CD4-positive, alpha-beta memory T cell (primary cell): ENCODE measurements at regions of chr15 and their contacts with region 1.

Region 1: GRCh38 chr15:56918046-56918938 is at the start of gene TCF12:
- DNase-seq: peak; percentile 90 to 94 (median 91)
- H3K4me3 ChIP-seq: peak within 1 kb of the TSS; percentile 80 to 82
- H3K4me3 Mint-ChIP-seq: peak within 1 kb of the TSS; percentile 81 to 96 (median 88)
- H3K27ac ChIP-seq: peak within 1 kb of the TSS; percentile 79
- H3K27ac Mint-ChIP-seq: peak within 1 kb of the TSS; percentile 83 to 91 (median 86)
- H3K4me1 ChIP-seq: peaks cover 39% of the 10 kb centered on the region
- H3K4me1 Mint-ChIP-seq: peaks cover 32 to 55% (median 36%) of the 10 kb centered on the region in 4 donors
- H3K27me3 ChIP-seq: no peaks in the 10 kb centered on the region
- H3K27me3 Mint-ChIP-seq: no peaks in the 10 kb centered on the region
- total RNA-seq, gene TCF12: 78.5 to 86.5 TPM

Region 2: DNA sequence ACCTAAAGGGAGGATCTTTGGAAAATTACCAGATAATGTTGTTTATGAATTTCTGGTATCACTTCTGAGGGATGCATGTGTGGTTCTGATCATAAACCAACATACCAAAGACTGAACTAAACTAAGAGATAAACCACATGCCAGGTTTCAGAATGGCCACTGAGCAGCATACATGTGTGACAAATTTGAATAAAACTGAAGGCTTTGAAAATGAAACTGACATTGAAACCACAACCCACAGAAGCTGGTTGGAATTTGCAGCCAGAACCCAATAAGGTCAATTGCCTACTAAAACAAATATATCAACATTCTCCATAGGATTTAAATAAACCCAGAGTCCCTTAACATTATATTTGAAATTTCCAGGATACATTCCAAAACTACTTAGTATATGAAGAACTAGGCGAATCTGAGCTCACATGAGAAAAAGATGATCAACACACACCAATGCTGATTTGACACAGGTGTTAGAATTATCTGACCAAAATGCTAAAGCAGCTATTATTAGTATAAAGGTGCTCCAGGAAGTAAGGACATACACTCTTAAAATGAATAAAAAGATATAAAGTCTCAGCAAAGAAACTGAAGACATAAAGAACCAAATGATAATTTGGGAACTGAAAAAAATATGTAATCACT is 310.0 kb before region 1 on chr15:
- CTCF ChIA-PET with region 1: no interaction called
- POLR2A ChIA-PET with region 1: no interaction called
- intact Hi-C with region 1: no loop called
- DNase-seq: no peak
- H3K4me3 ChIP-seq: no peak overlapping the region
- H3K4me3 Mint-ChIP-seq: no peak overlapping the region
- H3K27ac ChIP-seq: no peak overlapping the region
- H3K27ac Mint-ChIP-seq: no peak overlapping the region
- H3K4me1 ChIP-seq: no peaks in the 10 kb centered on the region
- H3K4me1 Mint-ChIP-seq: peaks cover 0 to 4% (median 1%) of the 10 kb centered on the region in 4 donors
- H3K27me3 ChIP-seq: no peaks in the 10 kb centered on the region
- H3K27me3 Mint-ChIP-seq: peaks cover 6 to 7% of the 10 kb centered on the region in 2 donors

Region 3: GRCh38 chr15:56886932-56887781 is 31.1 kb before region 1 on chr15:
- CTCF ChIA-PET with region 1: interaction called, 16 read pairs
- POLR2A ChIA-PET with region 1: interaction called, 111 read pairs
- intact Hi-C with region 1: loop called (anchors 1 kb)
- DNase-seq: peak; percentile 81 to 85 (median 83)
- H3K4me3 ChIP-seq: peak overlapping the region; percentile 33 to 59
- H3K4me3 Mint-ChIP-seq: peak overlapping the region; percentile 88 to 93 (median 90)
- H3K27ac ChIP-seq: peak overlapping the region; percentile 83
- H3K27ac Mint-ChIP-seq: peak overlapping the region; percentile 92 to 98 (median 95)
- H3K4me1 ChIP-seq: peaks cover 19% of the 10 kb centered on the region
- H3K4me1 Mint-ChIP-seq: peaks cover 21 to 30% (median 27%) of the 10 kb centered on the region in 4 donors
- H3K27me3 ChIP-seq: no peaks in the 10 kb centered on the region
- H3K27me3 Mint-ChIP-seq: no peaks in the 10 kb centered on the region

Region 4: DNA sequence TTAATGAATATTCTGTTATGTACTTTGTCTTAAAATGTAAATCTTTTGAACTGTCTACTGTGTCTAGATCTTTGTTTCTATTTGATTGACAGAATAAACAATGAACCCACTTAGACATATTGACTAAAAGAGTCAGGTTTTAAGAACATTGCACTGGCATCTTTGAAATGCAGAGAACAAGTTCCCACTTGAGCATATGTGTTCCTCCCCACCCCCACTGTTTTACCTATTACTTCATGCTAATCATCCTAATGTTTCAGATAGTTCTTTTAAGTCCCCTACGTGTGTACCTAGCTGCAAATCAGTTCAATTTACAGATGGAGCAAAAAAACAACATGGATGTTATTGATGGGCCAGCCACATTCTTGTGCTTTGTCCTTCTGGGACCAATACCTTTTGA is 11.5 kb before region 1 on chr15:
- CTCF ChIA-PET with region 1: interaction called, 10 read pairs
- POLR2A ChIA-PET with region 1: interaction called, 16 read pairs
- intact Hi-C with region 1: no loop called
- DNase-seq: no peak
- H3K4me3 ChIP-seq: peak overlapping the region in 1 of 2 donors; percentile 40
- H3K4me3 Mint-ChIP-seq: peak overlapping the region; percentile 12 to 89 (median 77)
- H3K27ac ChIP-seq: peak overlapping the region; percentile 18
- H3K27ac Mint-ChIP-seq: peak overlapping the region in 5 of 7 donors; percentile 4 to 90 (median 60)
- H3K4me1 ChIP-seq: peaks cover 17% of the 10 kb centered on the region
- H3K4me1 Mint-ChIP-seq: peaks cover 5 to 21% (median 11%) of the 10 kb centered on the region in 4 donors
- H3K27me3 ChIP-seq: no peaks in the 10 kb centered on the region
- H3K27me3 Mint-ChIP-seq: no peaks in the 10 kb centered on the region

Region 5: GRCh38 chr15:56943403-56943802 is 25.1 kb after region 1 on chr15:
- CTCF ChIA-PET with region 1: interaction called, 11 read pairs
- POLR2A ChIA-PET with region 1: interaction called, 4 read pairs
- intact Hi-C with region 1: no loop called
- DNase-seq: no peak
- H3K4me3 ChIP-seq: no peak overlapping the region
- H3K4me3 Mint-ChIP-seq: no peak overlapping the region
- H3K27ac ChIP-seq: no peak overlapping the region
- H3K27ac Mint-ChIP-seq: no peak overlapping the region
- H3K4me1 ChIP-seq: peaks cover 3% of the 10 kb centered on the region
- H3K4me1 Mint-ChIP-seq: peaks cover 28 to 49% (median 36%) of the 10 kb centered on the region in 4 donors
- H3K27me3 ChIP-seq: no peaks in the 10 kb centered on the region
- H3K27me3 Mint-ChIP-seq: no peaks in the 10 kb centered on the region

Region 6: GRCh38 chr15:57031605-57032004 is 113.3 kb after region 1 on chr15:
- CTCF ChIA-PET with region 1: no interaction called
- POLR2A ChIA-PET with region 1: no interaction called
- intact Hi-C with region 1: no loop called
- DNase-seq: no peak
- H3K4me3 ChIP-seq: no peak overlapping the region
- H3K4me3 Mint-ChIP-seq: no peak overlapping the region
- H3K27ac ChIP-seq: no peak overlapping the region
- H3K27ac Mint-ChIP-seq: peak overlapping the region in 2 of 7 donors; percentile 32 to 48
- H3K4me1 ChIP-seq: peaks cover 12% of the 10 kb centered on the region
- H3K4me1 Mint-ChIP-seq: peaks cover 24 to 51% (median 41%) of the 10 kb centered on the region in 4 donors
- H3K27me3 ChIP-seq: no peaks in the 10 kb centered on the region
- H3K27me3 Mint-ChIP-seq: no peaks in the 10 kb centered on the region

Region 7: GRCh38 chr15:57213862-57214261 is 295.6 kb after region 1 on chr15:
- CTCF ChIA-PET with region 1: interaction called, 15 read pairs
- POLR2A ChIA-PET with region 1: no interaction called
- intact Hi-C with region 1: loop called (anchors 5 kb)
- DNase-seq: peak in 3 of 5 donors; percentile 4 to 14 (median 10)
- H3K4me3 ChIP-seq: no peak overlapping the region
- H3K4me3 Mint-ChIP-seq: no peak overlapping the region
- H3K27ac ChIP-seq: no peak overlapping the region
- H3K27ac Mint-ChIP-seq: peak overlapping the region in 1 of 7 donors; percentile 25
- H3K4me1 ChIP-seq: peaks cover 3% of the 10 kb centered on the region
- H3K4me1 Mint-ChIP-seq: peaks cover 3 to 18% (median 10%) of the 10 kb centered on the region in 4 donors
- H3K27me3 ChIP-seq: no peaks in the 10 kb centered on the region
- H3K27me3 Mint-ChIP-seq: no peaks in the 10 kb centered on the region